ENCODE measurements at regions of chr21 and their contacts with region 1.

Region 1: GRCh38 chr21:36889401-36889800 is 77.1 kb downstream of the HLCS start:
- DNase-seq: no peak
- H3K4me3 Mint-ChIP-seq: no peak overlapping the region
- H3K27ac Mint-ChIP-seq: no peak overlapping the region
- H3K4me1 Mint-ChIP-seq: no peaks in the 10 kb centered on the region
- H3K27me3 Mint-ChIP-seq: no peaks in the 10 kb centered on the region
- CTCF ChIP-seq: no peak

Region 2: DNA sequence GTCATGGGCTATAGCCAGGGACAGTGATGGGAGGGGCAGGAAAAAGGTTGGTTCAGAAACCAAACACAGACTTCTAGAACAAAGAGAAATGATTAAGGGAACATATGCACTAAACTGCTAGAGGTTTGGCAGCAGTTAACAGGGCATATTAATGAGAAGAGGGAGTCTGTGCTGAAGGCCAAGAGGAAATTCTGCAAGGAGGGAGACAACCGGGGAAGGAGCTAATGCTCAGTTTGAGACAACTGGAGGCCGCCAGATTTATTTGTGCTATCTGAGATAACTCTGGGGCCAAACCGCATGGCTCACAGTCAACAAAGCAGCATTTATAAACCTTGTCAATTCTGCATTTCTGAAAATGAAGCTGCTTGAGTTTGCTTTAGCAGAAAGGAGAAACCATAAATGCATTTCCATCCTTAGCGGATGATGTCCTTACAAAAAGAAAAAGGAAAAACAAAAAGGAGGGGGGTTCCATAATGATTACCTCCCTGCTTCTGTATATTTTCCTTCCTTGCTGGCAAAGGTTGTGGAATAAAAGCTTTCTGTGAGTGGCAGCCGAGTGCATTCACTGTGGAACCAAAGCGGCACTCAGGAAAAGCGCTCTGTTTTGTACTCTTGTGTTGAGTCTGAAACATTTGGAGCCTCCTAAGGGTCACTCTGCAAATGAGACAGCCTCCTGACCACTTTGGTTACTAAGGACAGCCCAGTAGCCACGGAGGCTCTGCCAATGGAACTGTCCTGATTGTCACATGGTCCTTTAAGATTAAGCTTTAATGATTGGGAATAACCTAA is 120.2 kb before region 1 on chr21:
- CTCF ChIA-PET with region 1: no interaction called
- intact Hi-C with region 1: no loop called
- DNase-seq: no peak
- H3K4me3 Mint-ChIP-seq: no peak overlapping the region
- H3K27ac Mint-ChIP-seq: no peak overlapping the region
- H3K4me1 Mint-ChIP-seq: peaks cover 19% of the 10 kb centered on the region
- H3K27me3 Mint-ChIP-seq: no peaks in the 10 kb centered on the region
- CTCF ChIP-seq: no peak

Region 3: GRCh38 chr21:36877741-36878140 is 11.7 kb before region 1 on chr21:
- CTCF ChIA-PET with region 1: no interaction called
- intact Hi-C with region 1: loop called (anchors 2 kb)
- DNase-seq: no peak
- H3K4me3 Mint-ChIP-seq: no peak overlapping the region
- H3K27ac Mint-ChIP-seq: no peak overlapping the region
- H3K4me1 Mint-ChIP-seq: no peaks in the 10 kb centered on the region
- H3K27me3 Mint-ChIP-seq: no peaks in the 10 kb centered on the region
- CTCF ChIP-seq: no peak

Measured in Calu3 (cell line).